Activated CD4-positive, alpha-beta T cell treated with anti-CD3 and anti-CD28 coated beads for 36 hours (primary cell): ENCODE measurements at regions of chrX and their contacts with region 1.

Region 1: GRCh38 chrX:46836701-46837557 is at the start of gene RP2:
- DNase-seq: peak; percentile 90
- ATAC-seq: peak; percentile 96
- H3K4me3 Mint-ChIP-seq: peak within 1 kb of the TSS; percentile 95
- H3K27ac Mint-ChIP-seq: peak within 1 kb of the TSS; percentile 86
- H3K4me1 Mint-ChIP-seq: peaks cover 5% of the 10 kb centered on the region
- H3K27me3 Mint-ChIP-seq: no peaks in the 10 kb centered on the region
- total RNA-seq, gene RP2: 3.3 to 5.0 TPM

Region 2: DNA sequence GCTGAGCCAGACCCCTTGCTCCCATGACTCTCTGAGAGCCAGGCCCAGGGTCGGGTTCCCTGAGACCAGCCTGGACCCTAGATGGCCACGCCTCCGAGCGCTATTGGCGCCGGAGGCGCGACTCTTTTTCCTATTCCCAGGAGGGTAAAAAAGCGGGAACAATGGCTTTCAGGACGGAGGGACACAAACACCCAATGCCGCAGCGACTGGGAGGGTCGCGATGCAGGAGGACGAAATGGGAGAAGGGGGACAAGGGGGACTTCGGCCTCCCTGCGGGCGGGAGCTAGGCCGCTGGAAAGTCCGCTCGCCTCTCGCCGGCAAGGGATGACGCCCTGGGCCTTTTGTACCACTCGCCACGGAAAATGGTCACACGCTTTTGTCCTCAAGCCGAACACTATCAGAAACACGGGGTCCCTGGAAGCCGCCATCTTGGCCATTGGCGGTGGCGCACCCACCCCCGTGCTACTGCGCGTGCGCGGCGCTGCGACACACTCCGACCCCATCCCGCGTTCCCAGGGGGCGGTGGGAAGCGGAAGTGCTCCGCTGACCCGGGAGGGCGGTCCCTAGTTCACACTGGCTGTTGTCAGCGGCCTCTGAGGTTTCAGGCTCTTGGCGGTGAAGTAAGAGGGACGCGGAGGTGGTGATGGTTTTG is 390.1 kb before region 1 on chrX:
- CTCF ChIA-PET with region 1: no interaction called
- POLR2A ChIA-PET with region 1: no interaction called
- intact Hi-C with region 1: loop called in 1 of 2 experiments (anchors 5 kb)
- DNase-seq: peak; percentile 92
- ATAC-seq: peak; percentile 94
- H3K4me3 Mint-ChIP-seq: peak overlapping the region; percentile 82
- H3K27ac Mint-ChIP-seq: peak overlapping the region; percentile 96
- H3K4me1 Mint-ChIP-seq: peaks cover 22% of the 10 kb centered on the region
- H3K27me3 Mint-ChIP-seq: no peaks in the 10 kb centered on the region

Region 3: DNA sequence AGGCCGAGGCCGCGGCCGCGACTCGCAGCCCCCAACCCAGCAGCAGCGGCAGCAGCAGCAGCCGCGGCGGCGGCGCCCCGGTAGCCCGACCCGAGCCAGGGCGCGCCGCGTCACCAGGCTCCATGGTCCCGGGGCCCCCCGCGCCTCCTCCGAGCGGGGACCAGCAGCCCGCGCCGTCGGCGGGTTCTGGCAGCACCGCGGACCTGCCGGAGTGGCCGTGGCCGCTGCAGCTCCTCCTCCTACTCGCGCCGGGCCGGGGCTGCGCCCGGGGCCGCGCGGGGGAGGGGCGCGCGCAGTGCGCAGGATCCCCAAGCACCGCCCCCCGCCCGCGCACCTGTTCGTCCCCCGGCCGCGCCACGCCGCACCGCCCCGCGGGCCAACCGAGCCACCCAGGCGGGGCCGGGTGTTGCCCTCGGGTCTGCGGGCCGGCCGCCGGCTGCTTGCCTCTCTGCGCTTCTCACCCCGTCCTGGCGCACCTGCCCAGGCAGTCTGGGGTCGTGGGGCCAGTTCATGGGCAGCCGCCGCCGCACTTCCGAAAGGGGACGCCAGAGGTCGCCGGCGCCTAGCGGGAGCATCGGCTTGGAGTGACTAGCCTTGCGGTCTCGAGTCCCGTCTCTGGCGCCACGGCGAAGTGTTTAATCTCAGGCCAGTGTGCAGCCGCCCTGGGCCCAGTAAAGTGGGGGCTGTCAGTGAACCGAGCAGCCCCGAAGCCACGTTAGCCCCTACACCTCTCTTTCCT is 77.9 kb before region 1 on chrX and contains the start of gene SLC9A7:
- CTCF ChIA-PET with region 1: no interaction called
- POLR2A ChIA-PET with region 1: no interaction called
- intact Hi-C with region 1: loop called in 1 of 2 experiments (anchors 1 kb)
- DNase-seq: peak; percentile 88
- ATAC-seq: peak; percentile 84
- H3K4me3 Mint-ChIP-seq: peak within 1 kb of the TSS; percentile 92
- H3K27ac Mint-ChIP-seq: peak within 1 kb of the TSS; percentile 91
- H3K4me1 Mint-ChIP-seq: peaks cover 28% of the 10 kb centered on the region
- H3K27me3 Mint-ChIP-seq: no peaks in the 10 kb centered on the region
- total RNA-seq, gene SLC9A7: 16.3 to 19.2 TPM

Region 4: GRCh38 chrX:46967547-46967946 is 130.6 kb after region 1 on chrX:
- CTCF ChIA-PET with region 1: no interaction called
- POLR2A ChIA-PET with region 1: no interaction called
- intact Hi-C with region 1: loop called in 1 of 2 experiments (anchors 5 kb)
- DNase-seq: peak; percentile 53
- ATAC-seq: peak; percentile 84
- H3K4me3 Mint-ChIP-seq: no peak overlapping the region
- H3K27ac Mint-ChIP-seq: no peak overlapping the region
- H3K4me1 Mint-ChIP-seq: peaks cover 19% of the 10 kb centered on the region
- H3K27me3 Mint-ChIP-seq: peaks cover 5% of the 10 kb centered on the region

Region 5: GRCh38 chrX:47144626-47145394 is 307.9 kb after region 1 on chrX and contains the starts of genes NDUFB11 and RBM10:
- CTCF ChIA-PET with region 1: no interaction called
- POLR2A ChIA-PET with region 1: no interaction called
- intact Hi-C with region 1: loop called in 1 of 2 experiments (anchors 1 kb)
- DNase-seq: peak; percentile 94
- ATAC-seq: peak; percentile 93
- H3K4me3 Mint-ChIP-seq: peak within 1 kb of the TSS; percentile 98
- H3K27ac Mint-ChIP-seq: peak within 1 kb of the TSS; percentile 100
- H3K4me1 Mint-ChIP-seq: peaks cover 24% of the 10 kb centered on the region
- H3K27me3 Mint-ChIP-seq: no peaks in the 10 kb centered on the region
- total RNA-seq, gene NDUFB11: 89.9 to 90.8 TPM
- total RNA-seq, gene RBM10: 63.8 to 72.1 TPM